Activated CD4-positive, alpha-beta T cell treated with anti-CD3 and anti-CD28 coated beads, Interleukin-2, amount 10 ng/mL, durations not matched to agents 24 days and 14 days (primary cell): ENCODE measurements at regions of chr6 and their contacts with region 1.

Region 1: DNA sequence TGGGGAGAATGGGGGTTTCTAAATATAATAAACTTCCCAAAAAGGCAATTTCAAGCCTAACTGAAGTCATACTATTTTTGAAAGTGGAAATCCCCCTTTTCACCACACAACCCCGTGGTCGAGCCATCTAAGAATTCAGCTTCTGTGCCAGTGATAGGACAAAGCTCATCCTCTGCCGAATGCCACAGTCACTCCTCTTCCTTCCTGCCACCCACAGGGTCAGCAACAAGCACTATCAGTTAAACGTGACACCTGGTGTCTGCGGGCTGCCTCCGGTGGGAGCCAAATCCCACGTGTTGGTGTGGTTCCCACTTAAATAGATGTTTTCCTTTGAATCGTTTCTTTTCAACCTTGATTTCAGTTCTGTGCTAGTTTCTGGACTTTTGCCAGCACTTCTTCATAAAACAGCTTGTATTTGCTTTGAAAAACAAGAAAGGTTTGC is 60.7 kb downstream of the TNFAIP3 start:
- DNase-seq: peak; percentile 94
- H3K4me3 Mint-ChIP-seq: peak overlapping the region; percentile 68
- H3K27ac Mint-ChIP-seq: peak overlapping the region; percentile 93
- H3K4me1 Mint-ChIP-seq: peaks cover 63% of the 10 kb centered on the region
- H3K27me3 Mint-ChIP-seq: no peaks in the 10 kb centered on the region

Region 2: GRCh38 chr6:137680705-137681346 is 247.0 kb before region 1 on chr6:
- intact Hi-C with region 1: loop called (anchors 5 kb)
- DNase-seq: no peak
- H3K4me3 Mint-ChIP-seq: peak overlapping the region; percentile 22
- H3K27ac Mint-ChIP-seq: peak overlapping the region; percentile 61
- H3K4me1 Mint-ChIP-seq: peaks cover 61% of the 10 kb centered on the region
- H3K27me3 Mint-ChIP-seq: no peaks in the 10 kb centered on the region

Region 3: DNA sequence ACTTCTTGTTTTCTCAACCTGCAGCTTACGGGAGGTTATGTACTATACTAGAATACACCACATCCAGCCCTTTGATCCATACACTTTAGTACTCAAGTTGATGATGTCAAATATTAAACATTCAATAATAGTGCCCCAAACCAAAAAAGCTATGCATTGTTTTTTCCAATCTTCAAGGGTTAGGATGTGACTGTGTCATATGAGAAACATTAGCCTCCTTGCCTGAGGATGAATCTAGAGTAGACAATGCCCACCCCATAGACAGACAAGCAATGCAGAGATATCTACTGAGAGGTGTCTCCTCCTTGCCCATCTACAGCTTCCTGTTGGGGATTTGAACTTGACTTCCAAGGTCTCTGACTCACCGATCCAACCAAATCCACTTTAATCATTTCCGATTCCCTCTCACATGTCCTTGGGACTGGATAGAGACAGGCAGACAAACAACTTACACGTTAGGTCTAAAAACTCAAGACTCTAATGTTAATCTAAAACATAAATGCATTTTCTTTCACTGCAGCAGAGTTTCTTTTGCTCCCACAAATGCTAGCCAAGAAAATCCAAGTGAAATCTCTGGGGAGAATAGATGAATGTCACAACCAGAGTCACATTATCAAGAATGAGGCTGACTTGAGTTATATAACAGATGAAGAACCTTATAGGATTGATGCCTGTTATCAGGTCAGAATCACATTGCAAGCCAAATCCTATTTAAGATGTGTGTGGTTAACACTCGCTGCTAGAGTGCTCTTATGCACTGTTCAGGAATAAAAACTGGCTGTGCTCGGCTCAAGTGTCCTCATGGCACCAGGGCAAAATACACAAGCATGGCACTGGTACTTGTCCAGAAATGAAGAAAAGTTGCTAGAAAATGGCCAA is 136.3 kb before region 1 on chr6:
- intact Hi-C with region 1: loop called (anchors 5 kb)
- DNase-seq: no peak
- H3K4me3 Mint-ChIP-seq: peak overlapping the region; percentile 29
- H3K27ac Mint-ChIP-seq: peak overlapping the region; percentile 78
- H3K4me1 Mint-ChIP-seq: peaks cover 62% of the 10 kb centered on the region
- H3K27me3 Mint-ChIP-seq: no peaks in the 10 kb centered on the region

Region 4: DNA sequence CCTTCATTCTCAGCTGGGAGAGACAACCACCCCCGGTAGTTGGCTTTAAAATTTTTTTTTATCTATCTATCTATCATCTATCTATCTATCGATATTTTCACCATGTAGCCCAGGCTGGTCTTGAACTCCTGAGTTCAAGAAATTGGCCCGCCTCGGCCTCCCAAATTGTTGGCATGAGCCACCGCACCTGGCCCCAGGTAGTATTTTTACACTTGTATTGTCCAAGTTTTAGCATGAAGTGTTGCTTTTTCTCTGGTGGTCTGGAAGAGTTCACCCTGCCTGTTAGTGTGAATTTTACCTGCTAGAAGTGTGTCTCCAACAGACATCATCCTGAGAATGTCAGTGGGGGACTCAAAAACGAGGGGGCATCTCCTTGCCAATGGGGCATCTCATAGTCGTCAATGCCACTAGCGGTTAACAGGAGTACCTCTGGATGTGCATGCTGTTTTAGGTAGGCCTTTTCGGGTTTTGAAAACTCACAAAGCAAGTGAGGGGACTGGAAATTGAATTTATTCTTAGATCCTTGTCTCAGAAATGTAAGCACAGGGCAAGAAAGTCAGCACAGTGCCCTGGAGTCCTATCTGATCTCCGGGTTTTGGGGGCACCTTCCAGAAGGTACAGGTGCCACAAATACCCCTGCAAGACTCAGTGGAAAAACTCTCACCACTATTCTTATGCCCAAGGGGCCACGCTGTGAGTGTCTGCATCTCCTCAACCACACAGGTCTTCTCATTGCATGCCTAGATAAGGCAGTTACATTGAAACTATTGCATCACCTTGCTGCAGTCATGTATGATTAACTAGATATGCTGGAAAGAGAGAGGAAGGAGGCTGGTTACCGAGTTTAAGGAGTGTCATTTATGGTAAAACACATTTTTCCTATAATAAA is 23.6 kb before region 1 on chr6:
- intact Hi-C with region 1: loop called (anchors 1 kb)
- DNase-seq: peak; percentile 81
- H3K4me3 Mint-ChIP-seq: peak overlapping the region; percentile 75
- H3K27ac Mint-ChIP-seq: peak overlapping the region; percentile 99
- H3K4me1 Mint-ChIP-seq: peaks cover 50% of the 10 kb centered on the region
- H3K27me3 Mint-ChIP-seq: no peaks in the 10 kb centered on the region

Region 5: GRCh38 chr6:137944793-137945498 is 17.1 kb after region 1 on chr6:
- intact Hi-C with region 1: loop called (anchors 1 kb)
- DNase-seq: peak; percentile 77
- H3K4me3 Mint-ChIP-seq: peak overlapping the region; percentile 23
- H3K27ac Mint-ChIP-seq: peak overlapping the region; percentile 81
- H3K4me1 Mint-ChIP-seq: peaks cover 57% of the 10 kb centered on the region
- H3K27me3 Mint-ChIP-seq: no peaks in the 10 kb centered on the region

Region 6: GRCh38 chr6:138004423-138005287 is 76.9 kb after region 1 on chr6:
- intact Hi-C with region 1: no loop called
- DNase-seq: peak; percentile 76
- H3K4me3 Mint-ChIP-seq: no peak overlapping the region
- H3K27ac Mint-ChIP-seq: no peak overlapping the region
- H3K4me1 Mint-ChIP-seq: peaks cover 17% of the 10 kb centered on the region
- H3K27me3 Mint-ChIP-seq: peaks cover 5% of the 10 kb centered on the region

Region 7: GRCh38 chr6:138115877-138116660 is 188.3 kb after region 1 on chr6:
- intact Hi-C with region 1: no loop called
- DNase-seq: peak; percentile 81
- H3K4me3 Mint-ChIP-seq: no peak overlapping the region
- H3K27ac Mint-ChIP-seq: no peak overlapping the region
- H3K4me1 Mint-ChIP-seq: peaks cover 7% of the 10 kb centered on the region
- H3K27me3 Mint-ChIP-seq: peaks cover 44% of the 10 kb centered on the region